ENCODE measurements at regions of chr17 and their contacts with region 1.

Region 1: DNA sequence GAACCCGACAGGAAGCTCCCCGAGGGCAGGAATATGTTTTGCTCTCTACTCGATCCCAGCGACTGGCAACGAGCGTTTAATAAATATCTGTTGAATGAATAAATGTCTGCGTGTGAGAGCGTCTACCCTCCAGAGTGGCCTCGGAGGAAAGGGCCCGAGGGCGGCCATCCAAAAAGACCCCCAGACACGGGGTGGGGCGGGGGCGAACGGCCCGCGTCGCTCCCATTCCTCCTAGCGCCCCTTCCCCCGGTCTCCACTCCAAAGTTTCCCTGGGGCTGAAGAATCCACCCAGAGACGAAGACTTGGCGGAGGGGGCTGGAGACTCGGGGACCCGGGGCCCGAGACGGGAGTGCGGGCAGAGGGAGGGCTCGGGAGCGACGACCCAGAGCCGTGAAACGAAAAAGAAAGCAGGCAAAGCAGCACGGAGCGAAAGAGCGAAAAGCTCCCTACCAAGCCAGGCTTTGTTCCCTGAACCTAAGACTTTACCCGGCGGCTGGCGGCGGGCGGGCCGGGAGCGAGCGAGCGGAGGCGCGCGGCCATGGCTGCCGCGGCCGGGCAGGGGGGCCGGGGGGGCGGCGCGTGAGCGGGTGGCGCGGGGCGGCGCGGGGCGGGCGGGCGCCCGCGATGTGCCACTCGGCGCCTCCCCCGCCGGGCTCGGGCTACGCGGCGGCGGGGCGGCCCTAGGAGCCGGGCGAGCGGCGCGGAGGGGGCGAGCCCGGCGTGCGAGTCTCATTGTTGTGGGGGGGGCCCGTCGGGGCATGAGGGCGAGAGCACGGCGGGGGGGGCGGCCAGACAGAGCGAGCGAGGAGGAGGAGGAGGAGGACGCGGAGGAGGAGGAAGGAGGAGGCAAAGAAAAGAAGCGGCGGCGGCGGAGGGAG is at the start of gene MLLT6:
- DNase-seq: peak; percentile 69

Region 2: GRCh38 chr17:38539386-38539785 is 165.5 kb before region 1 on chr17:
- CTCF ChIA-PET with region 1: no interaction called
- POLR2A ChIA-PET with region 1: no interaction called
- DNase-seq: no peak

Region 3: DNA sequence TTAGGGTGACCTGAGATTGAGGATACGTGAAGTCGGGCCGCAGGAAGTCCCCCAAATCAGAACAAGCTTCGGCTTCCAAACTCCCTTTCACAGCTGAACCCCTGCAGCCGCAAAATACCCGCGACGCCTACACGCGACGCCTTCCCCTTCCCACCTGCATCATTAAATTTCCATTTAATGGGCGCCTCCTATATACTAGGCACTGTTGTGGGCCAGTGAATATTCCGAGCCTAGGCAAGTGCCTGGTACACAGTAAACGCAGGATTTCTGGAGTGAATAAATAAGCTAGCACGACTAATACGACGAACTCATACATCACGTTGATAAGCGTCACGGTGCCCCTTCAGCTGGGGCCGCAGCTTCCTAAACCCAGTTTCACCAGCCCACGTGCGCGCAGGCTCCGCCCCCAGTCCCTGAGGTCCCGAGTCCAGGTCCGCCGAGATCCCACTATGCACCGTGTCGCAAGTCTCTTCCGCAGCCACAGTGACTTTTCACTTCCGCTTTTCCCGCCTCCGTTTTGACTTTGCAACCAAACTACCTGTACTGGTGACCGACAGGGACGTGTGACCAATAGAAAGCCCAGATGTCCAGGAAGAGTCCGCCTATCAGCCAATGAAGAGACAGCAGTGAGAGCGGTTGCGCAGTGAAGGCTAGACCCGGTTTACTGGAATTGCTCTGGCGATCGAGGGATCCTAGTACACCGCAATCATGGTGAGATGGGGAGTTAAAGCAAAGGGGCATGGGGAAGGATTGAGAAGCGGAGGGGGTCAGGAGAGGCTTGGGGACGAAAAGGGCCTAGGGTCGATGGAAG is 47.4 kb after region 1 on chr17 and contains the start of gene PSMB3:
- CTCF ChIA-PET with region 1: no interaction called
- POLR2A ChIA-PET with region 1: interaction called, 12 read pairs
- DNase-seq: peak; percentile 87

Measured in HEK293T (cell line).